Colonic mucosa (tissue), 4 donors: ENCODE measurements at regions of chr3 and their contacts with region 1.

Region 1: DNA sequence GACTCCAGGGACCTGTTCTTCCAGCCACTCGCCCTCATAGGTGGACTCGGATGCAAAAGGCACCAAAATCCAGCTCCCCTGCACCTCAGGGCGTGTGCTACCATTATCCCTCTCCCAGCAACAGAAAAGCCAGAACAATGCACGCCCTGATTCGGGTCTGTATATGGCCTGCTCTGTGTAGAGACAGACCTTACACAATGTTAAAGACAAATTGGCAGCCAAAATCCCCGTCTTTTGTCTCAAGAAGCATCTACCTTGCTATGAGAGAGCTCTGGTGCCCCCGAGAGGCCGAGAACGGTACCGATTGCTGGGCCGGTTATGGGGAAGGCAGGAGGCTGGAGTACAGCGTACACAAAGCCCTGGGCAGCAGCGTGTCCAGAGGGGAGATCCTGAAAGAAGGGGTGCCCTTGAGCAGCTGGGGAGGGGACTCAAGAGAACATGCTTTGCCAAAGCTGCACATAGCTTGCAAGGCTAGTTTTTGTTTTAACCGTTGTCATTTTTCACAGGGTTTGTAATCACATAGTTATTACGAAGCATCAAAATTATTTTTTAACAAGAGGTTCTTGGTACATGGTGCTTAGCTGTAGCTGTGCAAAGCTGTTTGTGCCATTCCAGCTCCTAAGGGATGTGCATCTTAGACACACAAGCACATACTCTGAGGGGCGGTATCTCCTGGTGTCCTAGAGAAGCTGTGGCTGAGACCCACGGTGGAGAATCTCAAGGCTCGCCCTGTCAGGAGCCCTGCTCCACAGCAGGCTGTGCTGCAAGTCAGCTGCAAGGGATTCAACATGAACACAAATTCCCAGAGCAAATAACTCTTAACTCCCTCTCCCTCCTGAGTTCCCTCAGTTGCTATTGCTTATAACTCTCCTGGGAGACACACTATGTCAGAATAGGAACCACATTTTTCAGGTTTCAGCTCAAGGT is 461.5 kb upstream of the PPP2R3A start:
- DNase-seq: peak; percentile 52
- H3K4me3 ChIP-seq: no peak overlapping the region
- H3K27ac ChIP-seq: no peak overlapping the region
- H3K4me1 ChIP-seq: no peaks in the 10 kb centered on the region
- H3K27me3 ChIP-seq: no peaks in the 10 kb centered on the region
- CTCF ChIP-seq: no peak

Region 2: DNA sequence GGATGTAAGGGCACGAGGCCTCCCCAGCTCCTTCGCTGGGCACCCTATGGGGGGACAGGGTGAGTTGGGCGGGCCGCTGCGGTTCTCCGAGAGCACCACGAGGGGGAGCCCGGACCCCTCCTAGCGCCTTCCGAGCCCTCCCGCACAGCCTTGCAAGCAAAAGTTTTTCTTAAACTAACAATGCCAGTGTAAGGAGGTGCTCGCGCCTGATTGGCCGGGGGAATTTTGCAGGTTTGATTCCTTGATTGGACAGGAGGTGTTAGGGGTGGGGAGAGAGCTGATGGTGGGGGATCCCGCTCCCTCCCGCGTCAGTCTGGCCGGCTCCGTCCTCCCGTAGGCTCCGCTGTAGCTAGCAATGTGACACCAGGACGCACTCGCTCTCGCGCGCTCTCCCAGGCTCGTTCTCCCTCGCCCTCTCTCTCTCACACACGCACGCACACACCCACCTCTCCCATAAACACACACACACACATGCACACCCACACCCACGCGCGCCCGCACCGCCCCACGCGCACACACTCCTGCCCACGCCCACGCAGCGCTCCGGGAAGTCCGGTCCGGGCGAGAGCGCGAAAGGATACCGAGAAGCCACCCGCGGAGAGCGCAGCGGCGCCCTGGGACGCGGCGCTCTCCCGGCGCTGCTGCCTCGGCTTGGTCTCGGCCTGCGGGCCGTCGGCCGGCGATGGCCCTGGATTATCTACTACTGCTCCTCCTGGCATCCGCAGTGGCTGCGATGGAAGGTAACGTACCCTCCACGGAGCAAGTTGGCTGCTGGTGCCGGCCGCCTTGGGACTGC is 708.9 kb before region 1 on chr3 and contains the start of gene EPHB1:
- intact Hi-C with region 1: loop called (anchors 10 kb)
- DNase-seq: peak; percentile 72
- H3K4me3 ChIP-seq: peak within 1 kb of the TSS; percentile 43
- H3K27ac ChIP-seq: no peak within 1 kb of the TSS
- H3K4me1 ChIP-seq: no peaks in the 10 kb centered on the region
- H3K27me3 ChIP-seq: peaks cover 29% of the 10 kb centered on the region
- CTCF ChIP-seq: peak; percentile 73
- total RNA-seq, gene EPHB1: 0.40 to 0.74 TPM

Region 3: DNA sequence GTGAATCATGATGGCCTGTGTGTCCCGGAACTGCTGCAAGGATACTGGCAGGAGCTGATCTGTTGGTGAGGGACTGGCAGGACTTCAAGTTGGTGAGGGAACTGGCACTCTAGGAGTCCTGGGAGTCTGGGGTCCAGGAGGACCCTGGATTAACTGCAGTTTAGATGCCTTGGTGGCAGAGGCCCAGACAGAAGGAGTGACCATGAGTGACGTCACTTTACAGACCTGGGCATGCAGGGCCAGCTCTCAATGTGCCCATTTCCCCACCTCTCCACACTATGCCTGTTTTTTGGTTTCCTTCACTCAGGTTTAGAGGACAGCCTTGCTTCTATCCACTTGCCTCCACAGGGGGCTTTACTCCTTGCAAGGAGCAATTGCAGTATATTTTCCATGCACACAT is 554.9 kb before region 1 on chr3:
- intact Hi-C with region 1: no loop called
- DNase-seq: no peak
- H3K4me3 ChIP-seq: no peak overlapping the region
- H3K27ac ChIP-seq: no peak overlapping the region
- H3K4me1 ChIP-seq: no peaks in the 10 kb centered on the region
- H3K27me3 ChIP-seq: no peaks in the 10 kb centered on the region
- CTCF ChIP-seq: no peak

Region 4: GRCh38 chr3:135382188-135382587 is 121.8 kb before region 1 on chr3:
- intact Hi-C with region 1: no loop called
- DNase-seq: no peak
- H3K4me3 ChIP-seq: no peak overlapping the region
- H3K27ac ChIP-seq: no peak overlapping the region
- H3K4me1 ChIP-seq: no peaks in the 10 kb centered on the region
- H3K27me3 ChIP-seq: no peaks in the 10 kb centered on the region
- CTCF ChIP-seq: no peak

Region 5: DNA sequence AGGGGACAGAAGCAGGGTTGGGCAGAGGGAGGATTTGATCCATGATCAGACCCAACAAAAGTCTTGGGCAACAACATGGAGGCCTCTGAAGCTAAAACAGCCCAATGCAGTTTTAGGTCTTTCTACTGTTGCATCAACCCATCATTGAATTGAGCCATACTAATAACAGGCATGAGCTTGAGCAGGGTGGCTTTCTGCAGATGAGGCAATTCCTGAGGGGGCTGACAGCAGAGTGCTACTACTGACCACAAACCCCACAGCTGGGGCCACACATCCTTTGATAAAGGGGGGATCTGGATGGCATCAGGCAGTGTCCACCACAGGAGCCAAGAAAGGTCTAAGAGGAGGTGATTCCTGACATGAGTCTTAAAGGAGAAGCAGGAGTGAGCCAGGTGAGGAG is 55.5 kb before region 1 on chr3:
- intact Hi-C with region 1: no loop called
- DNase-seq: no peak
- H3K4me3 ChIP-seq: no peak overlapping the region
- H3K27ac ChIP-seq: no peak overlapping the region
- H3K4me1 ChIP-seq: no peaks in the 10 kb centered on the region
- H3K27me3 ChIP-seq: no peaks in the 10 kb centered on the region
- CTCF ChIP-seq: no peak